ENCODE measurements at regions of chr15 and their contacts with region 1.

Region 1: DNA sequence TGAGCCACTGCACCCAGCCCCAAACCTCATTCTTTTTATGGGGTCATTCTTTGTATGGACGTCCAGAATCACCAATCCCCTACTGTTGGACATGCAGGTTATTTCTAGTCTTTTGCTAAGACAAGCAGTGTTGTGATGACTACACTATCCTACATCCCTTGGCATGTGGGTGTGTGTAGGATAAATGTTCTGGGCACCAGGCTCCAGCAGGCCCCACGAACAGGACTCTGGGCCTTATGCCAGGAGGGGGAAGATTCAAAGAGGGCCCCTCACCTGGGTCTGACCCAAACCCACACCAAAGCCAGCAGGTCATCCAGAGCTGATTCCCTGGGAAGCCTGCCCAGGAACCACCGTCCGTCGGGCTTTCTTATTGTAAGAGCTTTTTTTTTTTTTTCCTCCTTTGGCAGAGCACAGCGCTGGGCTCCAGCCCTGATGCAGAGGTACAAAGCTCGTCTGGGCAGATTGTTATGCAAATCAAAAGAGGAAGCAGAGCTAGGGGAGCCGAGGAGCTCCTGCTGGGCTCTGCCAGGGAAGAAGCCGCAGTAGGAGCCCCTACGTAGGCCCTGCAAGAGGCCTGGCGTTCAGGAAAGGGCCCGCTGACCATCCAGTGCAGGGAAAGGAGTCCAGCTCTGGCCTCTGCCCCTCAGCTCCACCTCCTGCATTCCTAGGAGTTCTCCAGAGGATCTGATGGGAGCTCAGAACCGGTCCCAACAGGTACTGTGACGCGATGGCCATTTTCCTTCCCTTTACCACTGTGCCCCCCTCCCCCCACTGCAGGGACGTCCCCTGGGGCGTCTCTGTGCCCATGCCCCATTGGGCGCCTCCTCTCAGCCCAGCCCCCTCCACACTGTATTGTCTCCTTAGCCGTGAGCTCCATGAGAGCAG is 29.0 kb upstream of the FURIN start:
- DNase-seq: peak; percentile 72
- ATAC-seq: peak; percentile 93
- H3K4me3 Mint-ChIP-seq: peak overlapping the region; percentile 22
- H3K27ac Mint-ChIP-seq: peak overlapping the region; percentile 93
- H3K4me1 Mint-ChIP-seq: peaks cover 53% of the 10 kb centered on the region
- H3K27me3 Mint-ChIP-seq: no peaks in the 10 kb centered on the region
- CTCF ChIP-seq: no peak

Region 2: DNA sequence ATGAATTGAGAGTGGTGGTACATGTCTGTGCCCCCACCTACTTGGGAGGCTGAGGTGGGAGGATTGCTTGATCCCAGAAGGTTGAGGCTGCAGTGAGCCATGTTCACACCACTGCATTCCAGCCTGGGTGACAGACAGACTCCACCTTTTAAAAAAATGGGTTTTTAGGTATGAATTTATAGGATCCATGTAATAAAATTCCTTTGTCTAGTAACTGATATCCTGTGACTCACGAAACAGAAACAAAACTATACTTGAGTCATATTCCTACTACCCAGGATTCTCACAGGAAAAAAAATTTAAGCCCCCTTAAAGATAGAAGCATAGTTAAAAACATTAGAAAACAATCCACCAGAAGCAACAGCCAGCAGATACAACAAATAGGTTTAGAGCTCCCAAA is 319.7 kb before region 1 on chr15:
- CTCF ChIA-PET with region 1: no interaction called
- POLR2A ChIA-PET with region 1: no interaction called
- DNase-seq: no peak
- ATAC-seq: no peak
- H3K4me3 Mint-ChIP-seq: no peak overlapping the region
- H3K27ac Mint-ChIP-seq: no peak overlapping the region
- H3K4me1 Mint-ChIP-seq: peaks cover 2% of the 10 kb centered on the region
- H3K27me3 Mint-ChIP-seq: no peaks in the 10 kb centered on the region
- CTCF ChIP-seq: no peak

Region 3: DNA sequence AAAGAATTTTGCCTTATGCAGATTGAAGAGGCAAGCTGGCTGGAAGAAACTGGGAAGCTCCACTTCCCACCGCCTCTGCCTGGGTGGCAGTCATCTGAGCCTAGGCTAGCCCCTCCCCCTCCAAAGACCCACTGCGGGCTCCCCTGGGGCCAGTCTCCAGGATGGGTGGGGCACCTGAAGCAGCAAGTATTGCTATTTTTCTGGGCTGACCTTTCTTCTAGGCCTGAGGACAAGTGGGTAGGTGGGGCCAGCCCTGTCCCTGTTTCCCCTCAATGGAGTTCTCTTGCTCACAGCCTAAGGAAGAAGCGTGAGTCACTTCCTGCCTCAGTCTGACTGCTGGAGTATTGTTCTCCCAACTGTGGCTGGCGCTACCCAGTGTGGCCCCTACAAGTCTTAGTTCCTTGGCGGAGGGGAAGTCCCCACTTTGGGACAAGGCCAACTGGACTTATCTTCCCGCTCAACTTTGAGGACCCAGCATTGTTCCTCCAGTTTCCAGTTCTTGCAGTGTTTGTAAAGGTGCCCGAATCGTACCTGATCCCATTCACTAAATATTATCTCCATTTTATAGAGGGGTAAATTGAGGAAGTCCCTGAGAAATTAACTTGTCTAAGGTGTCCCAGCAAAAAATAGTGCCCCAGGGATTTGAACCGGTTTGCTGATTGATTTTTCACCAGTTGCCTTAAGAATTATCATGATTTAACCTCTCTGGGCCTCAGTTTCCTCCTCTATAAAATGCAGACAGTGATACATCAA is 30.3 kb after region 1 on chr15:
- CTCF ChIA-PET with region 1: interaction called, 3 read pairs
- POLR2A ChIA-PET with region 1: interaction called, 22 read pairs
- DNase-seq: peak; percentile 69
- ATAC-seq: peak; percentile 39
- H3K4me3 Mint-ChIP-seq: peak overlapping the region; percentile 75
- H3K27ac Mint-ChIP-seq: peak overlapping the region; percentile 91
- H3K4me1 Mint-ChIP-seq: peaks cover 60% of the 10 kb centered on the region
- H3K27me3 Mint-ChIP-seq: no peaks in the 10 kb centered on the region; the same call in 1 of the 2 replicates
- CTCF ChIP-seq: no peak

Region 4: DNA sequence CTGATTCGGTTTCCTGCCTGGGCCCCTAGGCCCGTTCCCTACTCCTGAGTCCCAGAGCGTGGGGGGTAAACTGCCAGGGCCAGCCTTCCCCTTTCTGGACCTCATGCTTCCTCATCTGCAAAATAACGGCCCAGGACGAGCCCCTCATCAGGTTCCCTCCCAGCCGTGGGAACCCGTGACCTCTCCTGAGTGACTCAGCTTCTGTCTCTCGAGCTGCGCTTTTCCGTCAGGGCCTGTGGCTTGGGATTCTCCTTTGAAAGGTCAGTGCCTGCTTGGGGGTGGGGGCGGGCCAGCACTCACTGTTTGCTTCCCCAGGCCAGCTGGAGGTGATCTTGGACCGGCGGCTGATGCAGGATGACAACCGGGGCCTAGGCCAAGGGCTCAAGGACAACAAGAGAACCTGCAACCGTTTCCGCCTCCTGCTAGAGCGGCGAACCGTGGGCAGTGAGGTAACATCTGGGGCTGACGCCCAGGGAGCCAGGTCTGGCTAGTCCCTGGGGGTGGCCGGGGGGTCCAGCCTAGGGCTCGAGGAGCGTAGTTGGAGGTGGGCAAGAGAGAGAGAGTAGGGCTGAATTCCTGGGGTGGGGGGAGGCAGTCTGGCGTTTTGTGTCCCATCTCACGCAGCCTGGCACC is 76.5 kb after region 1 on chr15:
- CTCF ChIA-PET with region 1: no interaction called
- POLR2A ChIA-PET with region 1: no interaction called
- DNase-seq: no peak
- ATAC-seq: peak; percentile 30
- H3K4me3 Mint-ChIP-seq: no peak overlapping the region
- H3K27ac Mint-ChIP-seq: peak overlapping the region; percentile 36
- H3K4me1 Mint-ChIP-seq: no peaks in the 10 kb centered on the region
- H3K27me3 Mint-ChIP-seq: no peaks in the 10 kb centered on the region; the same call in 1 of the 2 replicates
- CTCF ChIP-seq: no peak

Region 5: GRCh38 chr15:91022075-91022835 is 182.8 kb after region 1 on chr15 and contains the start of gene VPS33B:
- CTCF ChIA-PET with region 1: no interaction called
- POLR2A ChIA-PET with region 1: no interaction called
- DNase-seq: peak; percentile 82
- ATAC-seq: peak; percentile 92
- H3K4me3 Mint-ChIP-seq: peak within 1 kb of the TSS; percentile 88
- H3K27ac Mint-ChIP-seq: peak within 1 kb of the TSS; percentile 89
- H3K4me1 Mint-ChIP-seq: peaks cover 11% of the 10 kb centered on the region
- H3K27me3 Mint-ChIP-seq: no peaks in the 10 kb centered on the region
- CTCF ChIP-seq: no peak
- total RNA-seq, gene VPS33B: 18.1 to 21.1 TPM (median 20.7 TPM) in 3 replicates

Measured in WTC11 (cell line).